Endothelial cell of umbilical vein (primary cell): ENCODE measurements at regions of chr5 and their contacts with region 1.

Region 1: DNA sequence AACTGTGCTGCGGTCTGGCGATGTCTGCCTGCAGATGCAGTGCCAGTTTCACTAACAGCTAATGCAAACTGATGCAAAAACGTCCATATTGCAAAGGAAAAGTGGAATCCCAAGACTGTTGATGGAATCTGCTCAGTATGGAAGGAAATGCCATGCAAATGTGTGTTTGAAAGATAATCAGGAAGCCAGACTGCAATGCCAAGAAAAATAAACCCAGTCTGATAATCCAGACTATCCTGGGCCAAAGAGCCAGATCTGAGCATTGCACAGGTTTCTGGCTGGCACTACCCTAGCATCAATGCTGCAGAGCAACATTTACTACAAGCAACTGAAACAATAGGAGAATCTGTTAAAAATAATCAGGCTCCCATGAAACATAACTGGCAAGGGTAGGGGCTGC is 130.3 kb downstream of the FSTL4 start:
- DNase-seq: peak; percentile 85
- H3K4me3 ChIP-seq: no peak overlapping the region
- H3K27ac ChIP-seq: peak overlapping the region; percentile 22
- H3K4me1 ChIP-seq: peaks cover 14% of the 10 kb centered on the region
- H3K27me3 ChIP-seq: peaks cover 0 to 5% of the 10 kb centered on the region in 2 experiments
- CTCF ChIP-seq: no peak
- POLR2A ChIP-seq: no peak

Region 2: DNA sequence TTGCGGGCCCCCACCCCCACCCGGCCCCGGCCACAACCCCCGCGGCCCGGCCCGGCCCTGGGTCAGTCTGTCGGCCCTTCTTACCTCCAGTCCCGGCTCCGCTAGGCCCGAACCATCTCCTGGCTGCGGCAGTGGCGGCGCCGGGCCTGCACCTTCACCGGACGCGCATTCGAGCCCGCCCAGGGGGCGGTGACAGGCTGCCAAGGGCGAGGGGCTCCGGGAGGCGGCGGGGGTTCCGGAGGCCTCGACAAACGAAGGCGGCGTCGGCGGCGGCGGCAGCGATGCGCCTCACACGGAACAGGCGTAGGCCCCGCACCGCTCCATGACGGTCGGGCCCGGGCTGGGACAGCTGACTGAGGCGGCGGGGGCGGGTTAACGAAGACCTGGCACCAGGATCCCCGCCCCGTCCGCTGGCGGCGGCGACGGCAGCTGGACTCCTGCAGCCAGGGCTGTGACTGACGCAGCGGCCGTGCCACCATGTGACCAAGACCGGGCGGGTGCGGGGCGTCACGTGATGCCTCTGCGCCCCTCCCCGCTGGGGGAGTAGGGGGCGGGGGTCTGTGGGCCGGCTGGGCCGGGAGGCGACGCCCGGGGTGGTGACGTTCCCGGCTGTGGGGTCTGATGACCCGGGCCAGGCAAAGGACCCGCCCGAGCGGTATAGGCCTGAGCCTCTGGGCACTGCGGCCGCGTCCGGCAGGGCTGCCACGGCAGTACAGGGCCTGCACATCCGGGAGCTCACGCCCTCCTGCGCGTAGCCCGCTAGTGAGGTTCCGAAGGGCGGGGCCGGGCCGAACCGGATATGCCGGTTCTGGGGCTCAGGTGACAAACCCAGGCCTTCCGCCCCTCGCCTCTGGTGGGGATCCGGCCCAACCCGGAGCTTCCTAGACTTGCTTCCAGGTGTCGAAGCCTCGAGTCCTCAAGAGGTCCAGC is 518.6 kb before region 1 on chr5 and contains the start of gene AFF4:
- CTCF ChIA-PET with region 1: no interaction called
- POLR2A ChIA-PET with region 1: no interaction called
- dilution Hi-C with region 1: no loop called
- intact Hi-C with region 1: no loop called
- DNase-seq: peak; percentile 97
- H3K4me3 ChIP-seq: peak within 1 kb of the TSS; percentile 83 to 98 (median 84)
- H3K27ac ChIP-seq: peak within 1 kb of the TSS; percentile 81
- H3K4me1 ChIP-seq: peaks cover 15% of the 10 kb centered on the region
- H3K27me3 ChIP-seq: no peaks in the 10 kb centered on the region
- CTCF ChIP-seq: no peak
- POLR2A ChIP-seq: peak; percentile 90
- total RNA-seq, gene AFF4: 85.5 and 88.3 TPM in 2 replicates

Region 3: DNA sequence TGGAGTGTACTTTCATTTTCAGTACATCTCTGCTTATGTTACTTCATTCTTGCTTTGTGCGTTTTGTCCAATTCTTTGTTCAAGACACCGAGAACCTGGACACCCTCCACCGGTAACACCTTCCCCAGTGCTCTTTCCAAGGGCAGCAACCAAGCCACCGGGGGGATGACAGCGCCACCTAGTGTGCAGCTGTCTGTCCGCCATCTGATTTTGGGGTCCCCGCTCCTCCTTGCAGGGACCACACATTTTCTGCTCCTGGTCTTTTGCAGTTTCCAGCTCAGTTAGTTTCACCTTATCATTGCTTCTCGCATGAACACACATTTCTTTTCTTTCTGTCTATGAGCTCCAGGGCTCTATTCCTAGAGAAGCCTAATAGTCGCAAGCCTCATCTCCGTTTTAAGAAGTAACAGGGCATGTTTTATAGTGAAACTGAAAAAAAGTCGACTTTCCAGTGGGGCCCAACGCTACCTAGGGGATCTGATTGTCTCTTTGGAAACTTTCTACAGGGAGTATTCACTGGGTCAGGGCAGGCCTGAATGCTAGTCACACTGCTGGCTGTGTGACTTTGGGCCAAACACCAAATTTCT is 21.8 kb before region 1 on chr5:
- CTCF ChIA-PET with region 1: interaction called, 6 read pairs
- POLR2A ChIA-PET with region 1: no interaction called
- dilution Hi-C with region 1: no loop called
- intact Hi-C with region 1: loop called (anchors 1 kb)
- DNase-seq: no peak
- H3K4me3 ChIP-seq: no peak overlapping the region
- H3K27ac ChIP-seq: no peak overlapping the region
- H3K4me1 ChIP-seq: peaks cover 17% of the 10 kb centered on the region
- H3K27me3 ChIP-seq: no peaks in the 10 kb centered on the region
- CTCF ChIP-seq: peak; percentile 53 to 57
- POLR2A ChIP-seq: no peak

Region 4: DNA sequence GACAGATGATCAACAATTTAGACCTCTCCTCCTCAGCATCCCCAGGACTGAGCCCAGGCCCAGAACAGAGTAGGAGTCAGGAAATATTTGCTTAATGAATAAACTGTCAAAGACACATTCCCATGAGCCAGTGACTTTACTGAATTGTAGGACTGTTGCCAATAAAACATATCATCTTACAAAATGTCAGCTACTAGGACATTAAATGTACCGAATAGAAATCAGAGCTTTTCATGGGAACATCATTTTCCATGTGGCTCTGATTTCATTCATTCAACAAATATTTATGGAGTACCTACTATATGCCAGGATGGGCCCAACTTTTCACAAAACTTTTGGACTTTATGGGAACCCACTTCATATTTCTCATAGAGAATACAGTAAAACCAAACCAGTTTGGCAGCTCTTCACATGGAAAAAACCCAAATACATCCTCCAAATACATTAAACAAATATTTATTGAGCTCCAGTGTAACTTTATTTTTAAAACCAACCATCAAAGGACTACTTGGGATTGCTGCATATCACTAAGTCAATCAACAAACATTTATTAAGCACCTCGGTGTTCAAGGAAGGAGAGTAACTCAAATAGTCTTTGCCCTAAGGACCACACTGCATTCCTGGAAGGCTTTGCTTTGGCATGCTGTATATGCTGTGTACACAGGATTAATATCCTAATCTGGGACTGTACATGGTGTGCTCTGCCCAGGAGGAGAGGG is 511.4 kb after region 1 on chr5:
- CTCF ChIA-PET with region 1: no interaction called
- POLR2A ChIA-PET with region 1: no interaction called
- dilution Hi-C with region 1: no loop called
- intact Hi-C with region 1: no loop called
- DNase-seq: peak; percentile 66
- H3K4me3 ChIP-seq: no peak overlapping the region
- H3K27ac ChIP-seq: no peak overlapping the region
- H3K4me1 ChIP-seq: peaks cover 38% of the 10 kb centered on the region
- H3K27me3 ChIP-seq: no peaks in the 10 kb centered on the region
- CTCF ChIP-seq: no peak
- POLR2A ChIP-seq: no peak